ENCODE measurements at regions of chr2 and their contacts with region 1.

Region 1: GRCh38 chr2:100818606-100819369 is 1.2 kb upstream of the NPAS2 start:
- DNase-seq: peak; percentile 84

Region 2: GRCh38 chr2:100610381-100610831 is 208.4 kb before region 1 on chr2:
- intact Hi-C with region 1: loop called (anchors 5 kb)
- DNase-seq: no peak

Region 3: DNA sequence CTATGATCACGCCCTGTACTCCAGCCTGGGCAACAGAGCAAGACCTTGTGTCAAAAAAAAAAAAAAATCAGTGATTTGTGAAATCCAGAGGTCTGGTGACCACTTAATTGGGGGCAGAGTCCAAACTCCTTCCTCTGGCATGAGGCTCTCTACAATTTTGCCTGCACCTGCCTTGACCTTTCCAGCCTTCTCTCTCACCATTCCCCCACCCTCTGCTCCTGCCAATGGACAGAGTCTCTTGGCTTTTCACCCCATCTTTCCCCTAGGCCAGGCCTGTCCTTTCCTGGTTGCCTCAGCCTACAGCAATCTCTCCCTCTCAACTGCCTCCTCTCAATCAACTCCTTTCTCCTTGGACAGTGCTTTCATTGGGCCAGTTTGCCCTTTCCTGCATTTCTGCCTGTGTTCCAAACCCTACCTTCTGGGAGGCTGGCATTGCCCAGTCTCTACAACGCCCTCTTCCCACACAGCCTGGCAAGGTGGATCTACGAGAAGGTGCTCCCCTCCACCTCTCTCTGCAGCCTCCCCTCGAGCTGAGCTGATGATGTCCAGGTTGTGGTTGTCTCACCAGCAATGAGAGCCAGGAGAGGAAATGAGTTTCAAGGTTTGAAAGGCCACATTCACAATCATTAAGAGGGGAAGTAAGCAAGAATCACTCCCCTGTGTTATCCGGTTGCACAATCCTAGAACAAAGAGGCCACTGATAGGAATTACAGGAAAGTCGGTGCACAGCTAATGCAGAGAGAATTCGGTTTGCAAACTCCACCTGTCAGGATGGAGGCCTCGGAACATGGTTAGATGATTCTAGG is 38.4 kb before region 1 on chr2:
- intact Hi-C with region 1: loop called (anchors 2 kb)
- DNase-seq: no peak

Region 4: DNA sequence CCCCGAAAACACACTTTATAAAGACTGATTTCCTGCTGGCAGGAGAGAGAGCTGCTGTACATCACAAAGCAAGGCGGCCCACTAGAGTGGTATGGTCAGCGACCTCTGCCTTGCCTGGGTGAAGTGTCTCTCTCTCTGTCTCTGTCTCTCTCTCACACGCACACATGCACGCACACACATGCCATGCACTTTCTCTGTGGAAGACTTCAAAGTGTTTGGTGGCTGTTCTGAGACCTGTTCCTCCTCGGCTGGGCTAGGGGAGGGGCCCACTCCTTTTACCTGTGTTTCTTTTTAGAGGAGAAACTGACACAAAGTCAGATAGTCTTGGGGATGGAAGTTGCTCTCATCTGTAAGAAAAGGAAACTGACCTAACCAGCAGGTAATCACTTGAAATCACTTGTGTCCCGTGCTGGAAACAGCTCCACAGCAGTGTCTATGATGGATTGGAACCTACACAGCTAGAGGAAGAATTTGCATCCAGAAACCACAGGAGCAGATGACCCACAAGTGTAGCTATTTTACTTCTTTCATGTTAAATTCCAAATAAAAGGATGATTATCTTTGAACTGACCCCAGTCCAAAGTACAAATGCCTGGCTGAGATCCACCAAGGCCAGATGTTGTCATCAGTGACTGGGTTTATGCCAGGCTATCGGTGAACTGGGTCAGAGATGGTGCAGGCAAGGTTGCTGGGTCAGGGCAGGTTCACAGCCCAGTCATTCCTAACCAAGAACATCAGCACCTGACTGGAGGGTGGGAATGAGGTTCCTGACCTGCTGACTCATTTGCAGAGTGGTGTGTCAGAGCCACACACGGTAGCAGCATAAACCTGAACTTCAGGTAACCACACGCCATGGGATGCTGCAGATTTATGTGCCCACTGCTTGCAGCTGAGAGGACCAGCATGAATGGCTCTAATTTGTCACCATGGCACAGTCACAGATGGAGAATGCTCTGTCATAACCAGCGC is 64.1 kb after region 1 on chr2:
- intact Hi-C with region 1: no loop called
- DNase-seq: no peak

Region 5: GRCh38 chr2:100935372-100935752 is 116.6 kb after region 1 on chr2:
- intact Hi-C with region 1: loop called (anchors 5 kb)
- DNase-seq: no peak

Region 6: DNA sequence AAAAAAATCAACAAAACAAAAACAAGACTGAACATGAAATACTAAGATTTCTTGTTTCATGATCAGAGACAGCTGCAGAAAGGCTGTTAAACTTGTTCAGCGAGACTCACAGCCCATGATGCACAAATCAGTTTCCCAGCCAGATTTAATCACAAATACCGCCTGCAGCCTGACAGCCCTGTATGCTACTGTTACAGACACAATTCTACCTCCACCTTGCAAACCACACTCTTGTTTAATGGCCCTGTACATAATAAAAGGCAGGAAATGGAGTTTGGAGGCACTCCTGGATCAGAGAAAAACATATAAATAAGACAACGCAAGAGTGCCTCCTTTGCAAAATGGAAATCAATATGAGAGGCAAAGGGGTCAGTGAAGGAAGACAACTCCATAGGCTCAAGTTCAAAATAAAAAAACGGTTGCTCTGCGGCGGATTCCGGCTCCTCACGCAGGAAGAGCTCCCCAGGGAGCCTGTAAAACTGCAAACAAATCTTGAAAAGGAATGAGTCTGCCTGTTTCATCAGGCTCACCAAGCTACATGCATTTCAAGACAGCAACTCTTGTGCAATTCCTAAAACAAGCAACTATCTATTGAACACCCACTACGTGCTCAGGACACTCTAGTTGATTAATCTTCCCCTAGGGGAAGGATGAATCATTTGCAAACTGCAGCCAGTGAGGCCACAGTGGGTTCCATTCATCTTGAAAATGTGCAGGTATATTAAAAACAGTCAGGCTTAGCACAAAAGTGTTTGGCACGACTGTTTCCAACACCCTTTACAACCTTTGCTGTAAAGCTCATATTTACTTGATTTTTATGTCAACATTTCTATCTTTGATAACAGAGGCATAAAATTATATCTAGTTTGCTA is 294.8 kb after region 1 on chr2:
- intact Hi-C with region 1: loop called (anchors 10 kb)
- DNase-seq: no peak